Activated CD4-positive, alpha-beta T cell treated with anti-CD3 and anti-CD28 coated beads, Interleukin-2, amount 10 ng/mL, durations not matched to agents 24 days and 14 days (primary cell): ENCODE measurements at regions of chr10 and their contacts with region 1.

Region 1: DNA sequence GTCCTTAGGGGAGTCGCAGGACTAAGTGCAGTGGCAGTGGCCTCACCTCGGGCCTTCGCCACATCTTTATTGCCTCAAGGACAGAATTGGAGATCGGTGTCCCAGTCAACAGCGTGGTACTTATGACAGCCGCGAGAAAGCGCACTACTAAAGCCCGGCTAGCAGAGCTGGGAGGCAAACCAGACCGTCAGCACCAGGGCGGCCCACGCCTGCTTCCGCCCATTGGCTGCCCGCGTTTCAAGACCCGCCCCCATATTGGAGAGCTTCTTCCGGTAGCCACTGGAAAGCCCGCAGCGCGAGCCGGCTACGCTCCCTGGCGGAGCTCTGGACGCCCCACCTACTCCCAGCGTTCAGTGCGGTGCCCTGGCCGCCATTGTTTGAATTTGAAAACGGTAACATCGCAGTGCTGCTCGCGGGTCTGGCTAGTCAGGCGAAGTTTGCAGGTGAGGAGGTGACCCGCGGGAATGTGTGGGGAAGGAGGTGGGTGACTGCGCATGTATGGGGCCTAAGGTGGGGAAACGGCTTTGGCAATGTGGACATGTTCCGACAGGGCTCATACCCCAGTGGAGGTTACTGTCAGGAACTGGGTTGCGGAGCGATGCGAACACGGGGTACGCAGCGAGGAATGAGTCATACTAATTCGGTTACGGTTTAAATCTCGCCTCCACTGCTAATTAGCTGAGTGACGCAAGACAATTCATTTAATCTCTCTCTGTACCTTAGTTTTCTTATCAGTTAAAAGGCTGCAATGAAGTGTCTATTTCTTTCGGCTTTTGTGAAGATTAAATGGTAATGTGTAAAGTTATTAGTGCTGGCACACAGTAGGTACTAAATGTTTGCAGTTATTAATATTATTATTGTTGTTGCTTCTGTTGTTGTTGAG is at the start of gene KIF20B:
- DNase-seq: peak; percentile 99
- H3K4me3 Mint-ChIP-seq: peak within 1 kb of the TSS; percentile 95
- H3K27ac Mint-ChIP-seq: peak within 1 kb of the TSS; percentile 98
- H3K4me1 Mint-ChIP-seq: peaks cover 42% of the 10 kb centered on the region
- H3K27me3 Mint-ChIP-seq: no peaks in the 10 kb centered on the region
- total RNA-seq, gene KIF20B: 55.0 and 55.6 TPM in 2 replicates

Region 2: GRCh38 chr10:89670926-89671325 is 30.6 kb before region 1 on chr10:
- intact Hi-C with region 1: no loop called
- DNase-seq: no peak
- H3K4me3 Mint-ChIP-seq: no peak overlapping the region
- H3K27ac Mint-ChIP-seq: no peak overlapping the region
- H3K4me1 Mint-ChIP-seq: no peaks in the 10 kb centered on the region
- H3K27me3 Mint-ChIP-seq: peaks cover 28% of the 10 kb centered on the region

Region 3: DNA sequence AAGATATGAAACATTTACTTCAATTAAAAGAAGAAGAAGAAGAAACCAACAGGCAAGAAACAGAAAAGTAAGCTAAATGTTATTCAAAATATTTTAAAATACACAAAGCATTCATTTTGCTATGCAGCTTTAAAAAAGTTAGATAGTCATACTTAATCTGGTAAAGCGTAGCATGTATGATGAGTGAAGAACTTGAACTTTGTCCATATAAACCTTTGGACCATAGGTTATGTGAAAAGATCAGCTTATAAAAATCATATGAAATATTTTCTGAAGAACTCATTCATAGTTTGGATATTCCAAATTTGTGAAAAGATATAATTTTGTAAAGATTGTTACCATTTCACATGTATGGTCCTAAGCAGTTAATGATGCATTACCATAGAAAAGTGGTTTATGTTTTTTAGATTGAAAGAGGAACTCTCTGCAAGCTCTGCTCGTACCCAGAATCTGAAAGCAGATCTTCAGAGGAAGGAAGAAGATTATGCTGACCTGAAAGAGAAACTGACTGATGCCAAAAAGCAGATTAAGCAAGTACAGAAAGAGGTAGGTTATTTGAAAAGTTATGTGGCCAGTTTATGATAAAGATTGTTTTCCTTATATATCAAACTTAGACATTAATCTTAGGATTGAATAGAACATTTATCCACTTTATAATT is 37.2 kb after region 1 on chr10:
- intact Hi-C with region 1: loop called (anchors 5 kb)
- DNase-seq: peak; percentile 71
- H3K4me3 Mint-ChIP-seq: peak overlapping the region; percentile 67
- H3K27ac Mint-ChIP-seq: peak overlapping the region; percentile 79
- H3K4me1 Mint-ChIP-seq: peaks cover 31% of the 10 kb centered on the region
- H3K27me3 Mint-ChIP-seq: no peaks in the 10 kb centered on the region